ENCODE measurements at regions of chr15 and their contacts with region 1.

Region 1: DNA sequence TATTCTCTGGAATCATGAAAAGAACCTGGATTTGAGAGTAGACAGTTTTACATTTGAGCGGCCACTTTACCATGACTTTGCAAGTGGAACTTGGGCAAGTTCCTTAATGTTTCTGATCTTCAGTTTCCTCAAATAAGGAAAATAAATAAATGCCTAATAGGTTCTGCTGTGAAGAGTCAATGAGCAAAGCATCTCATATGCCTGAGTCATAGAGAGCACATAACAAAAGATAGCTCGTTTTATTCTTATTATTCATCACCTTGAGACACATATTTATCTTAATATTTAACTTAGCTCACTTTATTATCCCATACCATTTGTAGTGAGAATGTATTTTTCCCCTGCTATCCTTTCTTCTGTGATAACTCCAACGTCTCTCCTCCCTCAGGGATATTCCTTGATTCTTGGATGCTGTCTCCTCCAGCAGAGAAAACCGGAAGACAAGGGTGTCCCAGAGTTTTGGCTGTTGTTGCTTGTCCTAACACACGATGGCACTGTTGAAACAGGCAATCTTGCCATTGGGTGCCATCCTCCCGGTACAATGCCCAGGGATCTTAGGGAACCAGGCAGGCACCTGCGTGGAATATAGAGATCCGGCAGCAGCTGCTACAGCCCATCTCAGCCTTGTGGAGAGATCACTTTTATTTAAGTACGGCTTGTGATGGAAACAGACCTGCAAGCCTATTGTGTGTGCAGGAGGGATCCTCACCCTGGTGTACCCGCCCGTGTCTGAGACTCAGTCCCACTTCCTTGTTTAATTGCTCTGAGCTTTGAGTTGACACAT is 33.3 kb upstream of the VPS33B start:
- DNase-seq: peak; percentile 62
- H3K4me3 Mint-ChIP-seq: no peak overlapping the region
- H3K27ac Mint-ChIP-seq: no peak overlapping the region
- H3K4me1 Mint-ChIP-seq: no peaks in the 10 kb centered on the region
- H3K27me3 Mint-ChIP-seq: peaks cover 31% of the 10 kb centered on the region

Region 2: DNA sequence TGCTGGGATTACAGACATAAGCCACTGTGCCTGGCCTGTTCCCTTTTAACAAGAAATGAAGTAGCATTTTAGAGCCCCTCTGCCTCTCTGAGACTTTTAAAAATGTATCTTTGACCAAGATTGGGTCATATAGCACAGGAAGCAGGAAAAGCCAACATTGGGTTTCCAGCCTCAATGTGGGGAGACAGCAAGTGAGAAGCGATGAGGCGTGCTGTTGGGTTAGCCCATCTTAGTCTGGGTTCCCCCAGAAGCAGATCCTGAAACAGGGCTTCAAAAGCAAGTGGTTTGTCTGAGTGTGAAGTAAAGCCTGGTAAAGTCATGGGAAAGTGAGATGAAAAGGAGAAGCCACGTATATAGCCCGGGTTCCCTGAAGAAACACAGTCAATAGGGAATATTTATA is 92.5 kb after region 1 on chr15:
- CTCF ChIA-PET with region 1: no interaction called
- intact Hi-C with region 1: no loop called
- DNase-seq: no peak
- H3K4me3 Mint-ChIP-seq: no peak overlapping the region
- H3K27ac Mint-ChIP-seq: no peak overlapping the region
- H3K4me1 Mint-ChIP-seq: no peaks in the 10 kb centered on the region
- H3K27me3 Mint-ChIP-seq: peaks cover 22% of the 10 kb centered on the region

Region 3: GRCh38 chr15:91224755-91225380 is 169.1 kb after region 1 on chr15:
- CTCF ChIA-PET with region 1: interaction called, 20 read pairs
- intact Hi-C with region 1: loop called (anchors 1 kb)
- DNase-seq: peak; percentile 9
- H3K4me3 Mint-ChIP-seq: no peak overlapping the region
- H3K27ac Mint-ChIP-seq: no peak overlapping the region
- H3K4me1 Mint-ChIP-seq: no peaks in the 10 kb centered on the region
- H3K27me3 Mint-ChIP-seq: peaks cover 29% of the 10 kb centered on the region

Region 4: GRCh38 chr15:91246998-91247397 is 191.3 kb after region 1 on chr15:
- CTCF ChIA-PET with region 1: interaction called, 29 read pairs
- intact Hi-C with region 1: loop called (anchors 1 kb)
- DNase-seq: no peak
- H3K4me3 Mint-ChIP-seq: no peak overlapping the region
- H3K27ac Mint-ChIP-seq: no peak overlapping the region
- H3K4me1 Mint-ChIP-seq: no peaks in the 10 kb centered on the region
- H3K27me3 Mint-ChIP-seq: peaks cover 2% of the 10 kb centered on the region

Measured in activated naive CD4-positive, alpha-beta T cell treated with anti-CD3 and anti-CD28 coated beads for 36 hours (primary cell).